HEK293 (cell line): ENCODE measurements at regions of chr21 and their contacts with region 1.

Region 1: DNA sequence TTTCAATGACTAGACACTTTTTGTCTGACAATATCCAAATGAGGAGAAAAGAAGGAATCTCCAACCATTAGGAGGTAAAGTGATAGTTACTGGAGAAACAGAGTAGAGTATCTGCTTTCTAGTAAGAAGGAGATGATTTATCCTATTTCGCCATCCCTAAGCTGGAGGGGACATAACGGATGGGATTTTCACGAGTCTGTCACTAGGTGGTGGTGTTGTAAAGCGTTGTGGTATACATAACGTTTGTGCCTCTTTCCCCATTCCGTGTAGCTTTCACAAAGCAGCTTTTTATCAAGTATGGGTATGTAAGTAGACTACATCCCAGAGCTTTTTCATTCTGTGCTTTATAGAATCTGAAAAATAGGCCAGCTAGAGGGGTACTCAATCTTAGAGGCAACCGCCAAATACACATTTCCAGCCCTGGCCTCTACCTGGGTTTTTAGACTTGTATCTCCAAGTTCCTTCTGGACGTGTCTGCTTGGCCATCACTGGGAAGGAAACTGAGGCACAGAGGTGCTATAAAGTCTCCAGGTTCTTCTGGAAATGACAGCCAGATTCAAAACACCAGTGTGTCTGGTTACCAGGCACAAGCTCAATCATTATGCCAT is 33.3 kb upstream of the FAM3B start:
- H3K4me3 ChIP-seq: no peak overlapping the region
- H3K27ac ChIP-seq: no peak overlapping the region
- H3K4me1 ChIP-seq: no peaks in the 10 kb centered on the region
- CTCF ChIP-seq: peak; percentile 58

Region 2: GRCh38 chr21:41167348-41168342 is 115.7 kb before region 1 on chr21 and contains the start of gene BACE2:
- CTCF ChIA-PET with region 1: interaction called, 31 read pairs
- POLR2A ChIA-PET with region 1: interaction called, 5 read pairs
- H3K4me3 ChIP-seq: peak within 1 kb of the TSS; percentile 62
- H3K27ac ChIP-seq: peak within 1 kb of the TSS; percentile 89
- H3K4me1 ChIP-seq: peaks cover 6% of the 10 kb centered on the region
- CTCF ChIP-seq: peak; percentile 36

Region 3: GRCh38 chr21:41295721-41296254 is 12.5 kb after region 1 on chr21:
- CTCF ChIA-PET with region 1: interaction called, 18 read pairs
- POLR2A ChIA-PET with region 1: no interaction called
- H3K4me3 ChIP-seq: no peak overlapping the region
- H3K27ac ChIP-seq: no peak overlapping the region
- H3K4me1 ChIP-seq: no peaks in the 10 kb centered on the region
- CTCF ChIP-seq: no peak

Region 4: DNA sequence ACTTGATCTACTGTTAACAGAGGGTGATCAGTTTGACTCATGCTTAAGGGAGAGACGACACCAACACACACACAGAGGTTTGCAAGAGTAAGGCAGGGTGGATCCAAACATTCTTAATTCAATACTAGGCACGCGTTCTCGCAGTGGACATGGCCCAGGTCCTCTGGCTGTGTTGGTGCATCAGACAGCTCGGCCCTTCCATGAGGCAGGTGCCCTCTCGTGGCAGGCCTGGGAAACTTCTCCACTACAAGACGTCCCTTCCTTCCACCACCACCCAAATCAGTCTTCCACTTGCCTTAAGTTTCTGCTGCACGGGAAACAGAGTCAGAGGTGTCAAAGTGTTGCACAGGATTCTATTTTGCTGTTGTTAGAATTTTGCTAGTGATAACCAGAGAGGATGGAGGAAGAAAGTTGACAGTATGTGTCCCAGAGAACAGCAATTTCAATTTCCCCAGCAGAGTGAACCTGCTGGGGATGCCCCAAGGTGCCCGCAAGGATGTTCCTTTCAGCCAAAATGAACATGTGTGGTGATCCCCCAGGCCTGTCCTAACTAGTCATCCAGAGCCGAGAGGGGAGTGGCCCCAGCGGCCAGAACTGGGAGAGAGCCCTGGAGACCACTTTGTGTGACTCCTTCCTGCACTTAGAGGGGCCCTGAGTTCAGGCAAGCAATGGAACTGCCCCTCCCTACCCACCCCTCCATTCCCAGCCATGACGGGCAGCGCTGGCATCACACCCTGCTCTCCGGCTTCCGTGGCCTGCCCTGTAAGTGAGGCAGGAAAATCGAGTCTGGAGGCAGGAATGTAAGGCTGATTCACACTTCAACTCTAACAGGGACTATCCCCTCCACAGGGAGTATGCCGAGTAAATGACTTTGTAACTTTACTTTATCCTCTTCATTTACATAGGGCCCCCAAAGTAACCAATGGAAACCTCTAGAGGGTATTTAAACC is 177.5 kb after region 1 on chr21:
- CTCF ChIA-PET with region 1: interaction called, 127 read pairs
- POLR2A ChIA-PET with region 1: interaction called, 5 read pairs
- H3K4me3 ChIP-seq: no peak overlapping the region
- H3K27ac ChIP-seq: no peak overlapping the region
- H3K4me1 ChIP-seq: no peaks in the 10 kb centered on the region
- CTCF ChIP-seq: peak; percentile 73; the same call in 1 of the 2 replicates